ENCODE measurements at regions of chr2 and their contacts with region 1.

Region 1: DNA sequence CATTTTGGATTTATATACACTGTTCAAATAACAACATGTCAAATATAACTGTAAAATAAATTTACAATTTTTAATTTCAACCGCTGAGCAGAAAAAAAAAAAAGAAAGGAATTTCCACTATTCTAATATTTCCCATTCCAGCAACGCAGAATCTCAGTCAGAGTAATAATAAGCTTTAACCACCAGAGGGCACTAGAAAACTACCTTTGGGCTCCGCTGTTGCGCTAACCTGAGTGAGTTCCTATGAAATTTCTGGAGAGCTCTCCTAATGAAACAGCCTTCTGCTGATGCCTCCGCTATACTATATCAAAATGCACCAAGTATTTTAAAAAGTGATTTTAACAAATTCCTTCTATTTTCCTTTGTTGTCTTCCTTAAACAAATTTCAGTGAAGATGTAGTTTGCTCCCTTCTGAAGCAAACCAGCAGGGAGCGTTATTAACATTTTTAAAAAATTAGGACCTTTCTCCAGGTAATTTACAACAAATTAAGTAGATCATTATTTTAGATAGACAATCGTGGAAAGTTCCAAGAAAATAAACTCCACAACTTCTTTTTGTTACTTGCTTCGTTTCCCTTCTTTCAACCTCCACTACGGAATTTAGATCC is 23.0 kb downstream of the ERMN start:
- DNase-seq: no peak
- ATAC-seq: peak; percentile 50 to 74 (median 65)
- H3K4me3 ChIP-seq: no peak overlapping the region
- H3K27ac ChIP-seq: no peak overlapping the region
- H3K4me1 ChIP-seq: no peaks in the 10 kb centered on the region
- H3K27me3 ChIP-seq: peaks cover 0 to 11% (median 0%) of the 10 kb centered on the region in 9 donors
- CTCF ChIP-seq: peak; percentile 65 to 82 (median 76)
- POLR2A ChIP-seq: no peak

Region 2: GRCh38 chr2:157336137-157337010 is 33.8 kb after region 1 on chr2:
- intact Hi-C with region 1: loop called in 1 of 10 experiments (anchors 5 kb)
- DNase-seq: peak in 3 of 5 donors; percentile 18 to 30 (median 21)
- ATAC-seq: peak in 2 of 4 donors; percentile 36 to 46
- H3K4me3 ChIP-seq: no peak overlapping the region
- H3K27ac ChIP-seq: no peak overlapping the region
- H3K4me1 ChIP-seq: no peaks in the 10 kb centered on the region
- H3K27me3 ChIP-seq: no peaks in the 10 kb centered on the region
- CTCF ChIP-seq: peak; percentile 46 to 74 (median 64)
- POLR2A ChIP-seq: no peak

Region 3: DNA sequence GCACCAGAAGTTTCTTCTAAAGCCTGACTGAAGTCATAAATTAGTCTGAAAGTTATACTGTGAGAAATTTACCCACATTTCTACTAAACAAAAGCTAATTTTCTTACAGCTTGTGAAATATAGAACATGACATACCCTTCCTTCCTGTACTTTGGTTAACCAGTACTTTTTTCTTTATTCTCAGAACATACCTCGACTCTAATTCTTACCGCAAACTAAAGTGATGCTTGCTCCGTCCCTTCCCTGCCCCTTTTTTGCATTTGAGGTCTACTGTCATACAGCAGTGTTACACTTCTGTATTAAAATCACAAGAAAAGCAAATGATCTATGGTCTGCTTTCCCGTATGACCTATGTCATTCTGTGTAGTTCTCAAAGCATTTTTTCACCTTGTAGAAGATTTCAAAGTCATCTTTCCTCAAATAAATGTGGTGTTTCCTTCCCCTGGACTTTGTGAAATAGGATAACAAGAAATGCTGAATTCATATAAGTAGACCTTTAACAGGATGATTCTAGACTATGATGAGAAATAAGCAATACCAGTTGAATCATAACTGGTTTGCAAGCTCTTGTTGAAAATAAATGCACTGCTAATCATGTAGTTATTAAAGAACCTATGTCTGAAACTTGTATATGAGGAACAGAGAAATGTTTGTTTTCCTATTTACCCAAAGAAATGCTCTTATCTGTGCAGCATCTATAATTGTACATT is 110.9 kb after region 1 on chr2:
- intact Hi-C with region 1: no loop called
- DNase-seq: no peak
- ATAC-seq: peak in 1 of 4 donors; percentile 38
- H3K4me3 ChIP-seq: no peak overlapping the region
- H3K27ac ChIP-seq: peak overlapping the region in 1 of 12 donors; percentile 94
- H3K4me1 ChIP-seq: peaks cover 0 to 80% (median 0%) of the 10 kb centered on the region in 12 donors
- H3K27me3 ChIP-seq: no peaks in the 10 kb centered on the region
- CTCF ChIP-seq: no peak
- POLR2A ChIP-seq: no peak

Region 4: DNA sequence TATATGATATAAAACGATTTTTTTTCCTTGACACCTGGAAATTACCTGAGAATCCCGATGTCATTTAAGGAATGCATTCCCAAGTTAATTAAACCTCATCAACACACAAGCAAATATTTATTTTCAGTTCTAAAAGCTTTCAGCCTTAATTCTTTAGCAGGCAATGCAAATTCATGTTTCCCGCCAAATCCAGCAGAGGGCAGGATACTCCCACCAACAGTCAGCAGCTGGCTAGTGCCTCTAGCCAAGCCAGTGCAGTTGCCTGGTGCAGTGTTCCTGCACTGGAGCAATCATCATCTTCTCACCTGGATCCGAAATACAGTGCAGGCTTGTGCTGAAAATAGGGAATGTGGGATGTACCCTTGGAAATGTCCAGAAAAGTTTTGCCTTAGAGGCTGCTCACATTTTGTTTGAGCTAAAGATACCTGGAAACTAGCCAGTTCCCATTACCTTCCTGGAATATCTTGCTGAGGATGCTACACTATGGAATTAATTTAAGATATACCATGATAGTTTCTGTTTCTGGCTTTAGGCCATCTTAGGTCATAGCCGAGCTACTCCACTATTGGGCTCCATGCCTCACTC is 189.7 kb after region 1 on chr2:
- intact Hi-C with region 1: loop called in 2 of 10 experiments (anchors 5 to 10 kb)
- DNase-seq: peak; percentile 52 to 70 (median 64)
- ATAC-seq: peak in 3 of 4 donors; percentile 75 to 88 (median 85)
- H3K4me3 ChIP-seq: no peak overlapping the region
- H3K27ac ChIP-seq: no peak overlapping the region
- H3K4me1 ChIP-seq: no peaks in the 10 kb centered on the region
- H3K27me3 ChIP-seq: no peaks in the 10 kb centered on the region
- CTCF ChIP-seq: peak; percentile 53 to 80 (median 70)
- POLR2A ChIP-seq: no peak

Region 5: GRCh38 chr2:157596992-157597681 is 294.5 kb after region 1 on chr2:
- intact Hi-C with region 1: loop called in 8 of 10 experiments (anchors 2 to 10 kb)
- DNase-seq: peak in 3 of 5 donors; percentile 8 to 34 (median 32)
- ATAC-seq: peak in 2 of 4 donors; percentile 44 to 49
- H3K4me3 ChIP-seq: peak overlapping the region in 3 of 12 donors; percentile 25 to 40 (median 26)
- H3K27ac ChIP-seq: no peak overlapping the region
- H3K4me1 ChIP-seq: no peaks in the 10 kb centered on the region
- H3K27me3 ChIP-seq: peaks cover 0 to 26% (median 3%) of the 10 kb centered on the region in 9 donors
- CTCF ChIP-seq: peak in 11 of 12 donors; percentile 20 to 55 (median 33)
- POLR2A ChIP-seq: no peak

Region 6: GRCh38 chr2:157603198-157603597 is 300.6 kb after region 1 on chr2:
- intact Hi-C with region 1: loop called in 7 of 10 experiments (anchors 5 to 10 kb)
- DNase-seq: no peak
- ATAC-seq: no peak
- H3K4me3 ChIP-seq: no peak overlapping the region
- H3K27ac ChIP-seq: no peak overlapping the region
- H3K4me1 ChIP-seq: no peaks in the 10 kb centered on the region
- H3K27me3 ChIP-seq: peaks cover 0 to 13% (median 0%) of the 10 kb centered on the region in 9 donors
- CTCF ChIP-seq: no peak
- POLR2A ChIP-seq: no peak

Region 7: DNA sequence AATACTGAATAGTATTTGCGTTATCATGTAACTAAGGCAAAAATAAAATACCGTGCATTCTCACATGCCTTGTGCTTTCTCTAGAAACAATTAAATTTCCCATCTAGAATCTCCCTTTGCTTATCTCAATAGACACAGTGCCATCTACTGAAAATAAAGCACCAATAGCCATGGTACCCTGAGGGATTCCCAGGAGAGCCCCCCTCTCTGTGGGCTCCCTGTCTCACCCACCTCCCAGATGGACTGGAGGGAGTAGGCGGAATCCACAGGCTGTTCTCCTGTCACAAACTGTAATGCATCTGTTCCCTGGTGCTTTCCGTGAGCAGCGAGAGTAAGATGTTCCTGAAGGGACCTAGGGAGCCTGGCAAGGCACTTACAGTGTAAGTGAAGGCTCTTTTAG is 686.6 kb after region 1 on chr2:
- intact Hi-C with region 1: loop called in 1 of 10 experiments (anchors 10 kb)
- DNase-seq: no peak
- ATAC-seq: no peak
- H3K4me3 ChIP-seq: no peak overlapping the region
- H3K27ac ChIP-seq: no peak overlapping the region
- H3K4me1 ChIP-seq: no peaks in the 10 kb centered on the region
- H3K27me3 ChIP-seq: no peaks in the 10 kb centered on the region
- CTCF ChIP-seq: peak in 1 of 12 donors; percentile 7
- POLR2A ChIP-seq: no peak

Measured in heart left ventricle (tissue), 16 donors.